Head of caudate nucleus (tissue), 42 donors: ENCODE measurements at regions of chr4 and their contacts with region 1.

Region 1: GRCh38 chr4:163484906-163485305 is 9.6 kb upstream of the TMA16 start:
- DNase-seq: peak in 35 of 42 donors; percentile 4 to 87 (median 56)

Region 2: DNA sequence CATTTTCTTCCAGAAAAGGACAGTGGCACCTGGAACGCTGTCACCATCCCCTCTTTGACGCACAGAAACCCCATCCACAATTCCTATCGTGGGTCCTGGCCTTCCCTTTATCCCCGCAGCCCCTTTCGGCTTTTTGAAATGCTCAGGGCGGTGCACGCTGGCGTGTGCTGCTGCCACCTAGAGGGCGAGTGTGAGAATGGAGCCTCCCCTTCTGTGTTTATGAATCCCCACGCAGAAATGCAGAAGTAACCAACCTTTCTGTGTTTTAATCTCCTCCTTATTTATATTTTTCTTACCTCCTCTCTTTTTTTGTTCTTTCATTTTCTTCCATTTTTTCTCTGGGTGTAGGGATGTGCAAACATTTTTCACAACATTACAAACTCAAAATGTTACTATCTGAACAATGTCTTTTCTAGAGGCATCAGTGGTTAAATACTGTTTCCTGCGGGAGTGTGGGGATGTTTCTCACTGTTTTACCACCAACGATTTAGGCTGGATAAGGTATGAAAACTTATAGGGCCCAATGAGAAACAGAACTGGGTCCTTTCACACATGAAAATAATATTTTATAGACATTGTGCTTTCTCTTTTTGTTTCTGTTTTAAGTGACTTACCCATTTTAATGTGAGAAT is 59.6 kb after region 1 on chr4:
- intact Hi-C with region 1: loop called (anchors 2 kb)
- DNase-seq: peak; percentile 36 to 86 (median 69)

Region 3: DNA sequence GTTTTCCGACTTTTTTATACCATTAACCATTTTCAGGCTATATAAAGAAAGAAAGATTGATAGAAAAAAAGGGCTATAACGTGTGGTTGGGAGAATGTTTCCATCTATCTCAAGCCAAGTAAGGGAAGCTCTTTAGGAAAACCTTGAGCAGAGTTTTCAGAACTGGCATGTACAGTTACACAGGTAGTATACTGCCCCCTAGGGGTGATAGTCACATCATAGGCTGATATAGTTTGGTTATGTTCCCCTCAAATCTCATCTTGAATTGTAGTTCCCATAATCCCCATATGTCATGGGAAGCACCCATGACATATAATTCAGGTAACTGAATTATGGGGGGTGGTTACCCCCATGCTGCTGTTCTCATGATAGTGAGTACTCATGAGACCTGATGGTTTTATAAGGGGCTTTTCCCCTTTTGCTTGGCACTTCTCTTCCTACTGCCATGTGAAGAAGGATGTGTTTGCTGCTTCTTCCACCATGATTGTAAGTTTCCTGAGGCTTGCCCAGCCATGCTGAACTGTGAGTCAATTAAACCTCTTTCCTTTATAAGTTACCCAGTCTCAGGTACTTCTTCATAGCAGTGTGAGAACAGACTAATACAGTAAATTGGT is 196.4 kb after region 1 on chr4:
- intact Hi-C with region 1: no loop called
- DNase-seq: peak in 4 of 42 donors; percentile 15 to 22 (median 18)

Region 4: GRCh38 chr4:163988865-163989264 is 504.0 kb after region 1 on chr4:
- intact Hi-C with region 1: no loop called
- DNase-seq: peak in 9 of 42 donors; percentile 2 to 28 (median 4)

Region 5: DNA sequence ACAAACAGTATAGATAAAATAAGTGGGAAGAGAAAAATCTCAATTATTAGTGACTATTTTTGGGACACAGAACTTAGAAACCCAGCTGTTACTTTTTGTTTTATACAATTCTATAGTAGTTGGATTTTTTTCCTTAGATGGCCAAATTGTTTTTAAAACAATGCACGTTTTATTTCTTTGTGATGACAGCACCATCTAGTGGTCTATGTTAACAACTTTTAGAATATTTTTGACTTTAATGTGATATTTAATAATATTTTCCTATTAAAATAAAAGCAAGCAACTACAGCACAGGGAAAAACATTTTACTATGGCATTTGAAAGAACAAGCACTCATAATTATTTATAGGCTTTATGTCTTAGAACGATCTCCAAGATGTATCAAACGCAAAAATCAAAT is 1263.5 kb after region 1 on chr4:
- intact Hi-C with region 1: loop called (anchors 10 kb)
- DNase-seq: no peak